ENCODE measurements at regions of chr11 and their contacts with region 1.

Region 1: DNA sequence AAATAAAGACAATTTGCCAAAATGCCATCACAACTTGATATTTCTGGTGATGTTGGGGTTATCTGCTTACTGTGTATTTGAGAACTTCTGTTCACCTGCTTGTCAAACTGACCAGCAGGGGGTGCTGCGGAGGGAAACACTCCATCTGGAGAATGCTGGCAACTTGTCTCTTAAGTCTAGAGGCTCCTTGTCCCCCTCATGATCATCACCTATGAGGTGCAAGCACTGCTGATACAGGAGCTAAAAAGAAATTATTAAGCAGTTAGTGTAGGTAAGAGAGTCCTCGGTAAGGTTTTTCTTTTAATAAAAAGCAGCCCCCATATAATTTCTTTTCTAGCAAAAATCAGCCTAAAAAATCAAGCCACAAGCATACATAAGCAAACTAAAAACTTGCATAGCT is 32.7 kb upstream of the GLYATL1B start:
- DNase-seq: peak; percentile 90
- ATAC-seq: peak; percentile 10; the same call in 1 of the 2 replicates
- H3K4me3 Mint-ChIP-seq: no peak overlapping the region
- H3K27ac Mint-ChIP-seq: no peak overlapping the region
- H3K4me1 Mint-ChIP-seq: peaks cover 74% of the 10 kb centered on the region
- H3K27me3 Mint-ChIP-seq: peaks cover 3% of the 10 kb centered on the region; the same call in 1 of the 2 replicates
- CTCF ChIP-seq: peak; percentile 73

Region 2: DNA sequence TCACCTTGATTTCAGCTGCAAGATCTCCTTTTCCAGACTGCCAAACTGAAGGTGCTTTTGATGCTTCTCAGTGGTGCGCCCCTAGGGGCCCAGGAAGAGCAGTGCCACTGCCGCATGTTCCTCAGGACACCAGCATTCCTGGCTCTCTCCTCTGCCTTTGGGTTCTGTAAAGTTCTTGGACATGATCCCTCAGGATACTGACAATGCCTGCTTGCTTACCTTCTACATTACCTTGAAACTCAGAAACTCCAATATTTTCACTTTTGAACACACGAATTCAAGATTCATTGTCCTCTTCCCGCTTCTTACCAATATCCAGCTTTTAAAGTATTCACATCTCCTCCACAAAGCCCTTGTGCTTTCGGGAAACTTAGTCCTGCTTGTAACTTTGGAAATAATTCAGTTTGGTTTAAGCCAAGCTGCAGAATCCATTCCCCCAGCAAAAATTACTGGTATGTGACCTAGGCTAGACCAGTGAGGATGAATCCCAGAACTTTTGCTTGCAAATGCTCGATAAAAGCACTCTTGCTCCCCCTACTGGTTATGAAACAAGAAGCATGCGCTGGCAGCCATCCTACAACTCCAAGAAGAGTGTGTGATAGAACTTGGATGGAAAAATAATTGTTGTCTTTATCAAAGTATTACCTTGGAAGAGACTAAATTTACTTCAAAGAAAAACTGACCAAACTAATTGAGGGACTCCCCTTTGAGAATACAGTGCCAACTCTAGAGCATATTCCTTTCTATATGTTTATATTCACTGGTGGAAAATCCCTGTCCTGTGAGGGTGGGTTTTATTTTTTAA is 529.0 kb before region 1 on chr11:
- CTCF ChIA-PET with region 1: interaction called, 10 read pairs
- POLR2A ChIA-PET with region 1: no interaction called
- DNase-seq: peak; percentile 68
- ATAC-seq: peak; percentile 99
- H3K4me3 Mint-ChIP-seq: peak overlapping the region; percentile 60
- H3K27ac Mint-ChIP-seq: peak overlapping the region; percentile 63
- H3K4me1 Mint-ChIP-seq: peaks cover 8% of the 10 kb centered on the region
- H3K27me3 Mint-ChIP-seq: no peaks in the 10 kb centered on the region; the same call in 1 of the 2 replicates
- CTCF ChIP-seq: peak; percentile 70

Region 3: GRCh38 chr11:58923300-58923788 is 130.0 kb before region 1 on chr11:
- CTCF ChIA-PET with region 1: interaction called, 113 read pairs
- POLR2A ChIA-PET with region 1: interaction called, 3 read pairs
- DNase-seq: peak; percentile 43
- ATAC-seq: peak; percentile 56
- H3K4me3 Mint-ChIP-seq: peak overlapping the region; percentile 63
- H3K27ac Mint-ChIP-seq: peak overlapping the region; percentile 94
- H3K4me1 Mint-ChIP-seq: peaks cover 48% of the 10 kb centered on the region
- H3K27me3 Mint-ChIP-seq: peaks cover under 1% of the 10 kb centered on the region; the same call in 1 of the 2 replicates
- CTCF ChIP-seq: no peak

Region 4: GRCh38 chr11:58999291-58999680 is 54.1 kb before region 1 on chr11:
- CTCF ChIA-PET with region 1: interaction called, 18 read pairs
- POLR2A ChIA-PET with region 1: interaction called, 3 read pairs
- DNase-seq: no peak
- ATAC-seq: no peak
- H3K4me3 Mint-ChIP-seq: no peak overlapping the region
- H3K27ac Mint-ChIP-seq: no peak overlapping the region
- H3K4me1 Mint-ChIP-seq: peaks cover 4% of the 10 kb centered on the region
- H3K27me3 Mint-ChIP-seq: no peaks in the 10 kb centered on the region
- CTCF ChIP-seq: no peak

Region 5: GRCh38 chr11:59069087-59069486 is 15.7 kb after region 1 on chr11:
- CTCF ChIA-PET with region 1: interaction called, 28 read pairs
- POLR2A ChIA-PET with region 1: interaction called, 3 read pairs
- DNase-seq: no peak
- ATAC-seq: no peak
- H3K4me3 Mint-ChIP-seq: no peak overlapping the region
- H3K27ac Mint-ChIP-seq: no peak overlapping the region
- H3K4me1 Mint-ChIP-seq: peaks cover 2% of the 10 kb centered on the region; the same call in 1 of the 2 replicates
- H3K27me3 Mint-ChIP-seq: peaks cover 19% of the 10 kb centered on the region
- CTCF ChIP-seq: no peak

Region 6: DNA sequence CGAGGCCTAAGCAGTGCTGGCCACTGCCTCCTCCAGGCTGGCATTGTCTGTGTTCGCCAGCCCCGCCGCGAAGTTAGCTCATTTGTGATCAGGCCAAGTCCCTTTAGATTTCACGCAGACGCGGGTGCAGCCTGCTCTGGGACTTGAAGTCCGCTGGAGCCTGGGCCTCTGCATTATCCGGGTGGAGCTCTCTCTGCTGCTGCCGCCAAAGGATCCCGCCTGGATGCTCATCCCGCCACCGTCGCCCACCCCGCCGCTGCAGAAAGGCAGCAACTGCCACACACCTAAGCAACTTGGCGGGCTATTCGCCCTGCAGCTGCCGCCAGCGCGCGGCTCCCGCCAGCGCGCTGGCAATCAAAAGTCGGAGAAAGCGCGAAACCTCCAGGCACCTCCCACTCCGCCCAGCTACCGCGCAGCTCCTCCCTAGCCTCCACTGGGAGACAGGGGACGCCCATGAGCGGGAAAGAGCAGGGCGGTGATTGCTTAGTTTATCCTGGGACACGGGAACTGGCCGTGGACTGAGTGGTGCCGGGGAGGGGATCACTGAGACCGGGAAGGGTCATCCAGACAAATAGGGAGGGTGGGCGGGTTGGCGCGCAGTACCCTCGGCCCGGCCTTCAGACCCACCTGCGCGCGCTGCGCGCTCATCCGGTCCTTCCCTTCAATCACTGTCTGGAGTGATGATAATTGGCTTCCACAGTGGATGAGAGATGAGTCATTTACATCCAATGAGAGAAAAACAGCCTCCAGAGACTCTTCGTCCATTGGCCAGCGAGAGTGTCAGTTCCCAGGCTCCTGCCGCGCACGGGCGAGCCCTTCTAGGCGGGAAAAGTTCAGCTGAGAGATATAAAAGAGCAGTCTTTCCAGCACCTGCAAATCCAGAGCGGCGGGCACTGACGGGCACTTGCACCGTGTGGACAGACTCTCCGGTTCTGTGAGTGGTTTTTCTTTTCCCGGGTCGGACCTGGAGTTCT is 53.3 kb after region 1 on chr11 and contains the start of gene FAM111B:
- CTCF ChIA-PET with region 1: interaction called, 93 read pairs
- POLR2A ChIA-PET with region 1: interaction called, 6 read pairs
- DNase-seq: peak; percentile 82
- ATAC-seq: peak; percentile 82
- H3K4me3 Mint-ChIP-seq: peak within 1 kb of the TSS; percentile 85
- H3K27ac Mint-ChIP-seq: no peak within 1 kb of the TSS; the same call in 1 of the 2 replicates
- H3K4me1 Mint-ChIP-seq: peaks cover 35% of the 10 kb centered on the region
- H3K27me3 Mint-ChIP-seq: peaks cover 51% of the 10 kb centered on the region
- CTCF ChIP-seq: no peak
- total RNA-seq, gene FAM111B: 16.3 to 25.5 TPM (median 17.7 TPM) in 3 replicates

Region 7: DNA sequence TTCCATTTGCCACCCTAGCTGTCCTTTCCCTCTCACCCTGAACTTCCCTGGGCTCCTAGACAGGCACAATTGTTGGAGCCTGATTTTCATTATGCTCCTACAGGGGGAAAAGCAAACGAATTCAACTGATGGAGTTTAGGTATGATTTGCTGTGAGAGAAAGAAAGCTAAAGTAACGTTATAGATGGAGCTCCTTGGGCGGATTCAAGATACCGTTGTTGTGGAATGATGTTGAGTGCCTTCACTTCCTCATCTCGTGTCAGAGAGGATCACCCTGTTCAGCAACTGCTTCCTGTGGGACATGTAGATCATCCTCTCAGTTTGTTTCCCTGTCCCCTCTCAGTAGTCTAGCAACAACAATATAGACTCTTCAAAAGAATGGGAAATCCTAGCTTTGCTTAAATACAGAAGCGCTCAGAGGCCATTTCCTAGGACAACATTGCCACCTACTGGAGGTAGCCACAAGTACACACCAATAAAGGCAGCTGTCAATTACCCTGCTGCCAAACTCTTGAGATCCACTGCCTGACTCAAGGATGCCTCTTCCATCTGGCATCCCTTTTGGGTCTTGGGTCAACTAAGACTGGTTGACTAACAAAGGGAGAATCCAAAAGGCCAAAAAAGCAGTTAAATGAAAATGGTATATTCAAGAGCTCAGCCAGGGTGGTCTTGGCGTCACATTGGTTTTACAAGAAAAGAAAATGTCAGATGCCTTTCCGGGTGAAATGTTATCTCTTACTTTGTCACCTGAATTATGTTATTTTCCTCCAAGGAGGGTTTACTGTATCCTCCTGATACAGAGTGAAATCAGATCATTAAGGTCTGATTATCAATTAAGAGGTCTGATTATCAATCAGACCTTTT is 105.0 kb after region 1 on chr11:
- CTCF ChIA-PET with region 1: interaction called, 45 read pairs
- POLR2A ChIA-PET with region 1: no interaction called
- DNase-seq: peak; percentile 54
- ATAC-seq: peak; percentile 96
- H3K4me3 Mint-ChIP-seq: no peak overlapping the region
- H3K27ac Mint-ChIP-seq: no peak overlapping the region
- H3K4me1 Mint-ChIP-seq: peaks cover 8% of the 10 kb centered on the region
- H3K27me3 Mint-ChIP-seq: no peaks in the 10 kb centered on the region
- CTCF ChIP-seq: peak; percentile 54

Measured in WTC11 (cell line).